ENCODE measurements at regions of chr16 and their contacts with region 1.

Region 1: GRCh38 chr16:50368410-50369132 is at the start of gene BRD7:
- DNase-seq: peak; percentile 56
- ATAC-seq: peak; percentile 63
- H3K4me3 ChIP-seq: peak within 1 kb of the TSS; percentile 71
- H3K27ac ChIP-seq: no peak within 1 kb of the TSS
- H3K4me1 ChIP-seq: peaks cover 17% of the 10 kb centered on the region
- H3K27me3 ChIP-seq: no peaks in the 10 kb centered on the region
- CTCF ChIP-seq: no peak
- total RNA-seq, gene BRD7: 38.4 and 40.0 TPM in 2 replicates

Region 2: DNA sequence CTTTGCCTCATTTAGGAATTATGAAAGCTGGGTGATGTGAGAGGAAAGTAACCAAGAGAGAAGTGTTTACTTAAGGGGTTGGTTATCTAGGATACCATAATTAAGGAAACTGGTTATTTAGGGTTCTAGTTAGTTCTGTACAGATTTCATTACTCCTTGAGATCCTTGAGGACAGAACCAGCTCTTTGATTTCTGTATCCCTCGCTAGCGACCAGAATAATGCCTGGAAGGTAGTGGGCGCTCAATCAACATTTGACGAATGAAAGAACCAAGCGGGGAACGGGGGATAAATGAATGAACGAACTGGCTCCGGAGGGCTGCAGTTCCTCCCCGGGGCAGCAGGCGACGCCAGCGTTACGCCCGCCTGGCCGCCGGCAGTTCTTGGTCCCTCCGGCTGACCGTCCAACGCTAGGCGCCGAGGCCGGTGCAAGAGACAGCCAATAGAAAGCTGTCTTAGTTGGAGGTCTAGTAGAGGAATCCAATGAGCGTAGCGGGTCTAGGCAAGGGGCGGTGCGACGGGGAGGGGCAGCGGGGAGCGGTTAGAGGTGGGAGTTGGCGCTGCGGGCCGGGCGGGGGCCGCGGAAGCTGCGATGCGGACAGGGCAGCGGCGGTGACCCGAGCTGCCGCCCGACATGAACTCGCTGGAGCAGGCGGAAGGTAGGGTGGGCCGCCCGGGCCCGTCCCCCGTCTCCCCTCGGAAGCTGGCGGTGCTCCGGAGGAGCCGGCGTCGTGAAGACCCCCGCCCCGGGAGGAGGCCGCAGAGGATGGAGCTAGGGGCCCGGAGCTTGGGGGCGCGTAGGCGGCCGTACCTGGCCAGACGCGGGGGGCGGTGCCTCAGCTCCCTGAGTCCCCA is 343.7 kb before region 1 on chr16 and contains the start of gene CNEP1R1:
- CTCF ChIA-PET with region 1: no interaction called
- POLR2A ChIA-PET with region 1: no interaction called
- intact Hi-C with region 1: loop called (anchors 10 kb)
- DNase-seq: peak; percentile 93
- ATAC-seq: peak; percentile 93
- H3K4me3 ChIP-seq: peak within 1 kb of the TSS; percentile 95
- H3K27ac ChIP-seq: no peak within 1 kb of the TSS
- H3K4me1 ChIP-seq: peaks cover 6% of the 10 kb centered on the region
- H3K27me3 ChIP-seq: 0 out of 2 replicates have a peak, but pooled peaks cover 4% of the 10 kb centered on the region
- CTCF ChIP-seq: peak; percentile 91
- total RNA-seq, gene CNEP1R1: 7.0 and 10.5 TPM in 2 replicates

Region 3: GRCh38 chr16:50270510-50271147 is 97.9 kb before region 1 on chr16:
- CTCF ChIA-PET with region 1: interaction called, 11 read pairs
- POLR2A ChIA-PET with region 1: no interaction called
- intact Hi-C with region 1: no loop called
- DNase-seq: no peak
- ATAC-seq: no peak
- H3K4me3 ChIP-seq: no peak overlapping the region
- H3K27ac ChIP-seq: no peak overlapping the region
- H3K4me1 ChIP-seq: 0 out of 2 replicates have a peak, but pooled peaks cover 6% of the 10 kb centered on the region
- H3K27me3 ChIP-seq: no peaks in the 10 kb centered on the region
- CTCF ChIP-seq: no peak

Region 4: GRCh38 chr16:50326949-50327402 is 41.6 kb before region 1 on chr16:
- CTCF ChIA-PET with region 1: no interaction called
- POLR2A ChIA-PET with region 1: no interaction called
- intact Hi-C with region 1: loop called (anchors 5 kb)
- DNase-seq: peak; percentile 58
- ATAC-seq: peak; percentile 68; the same call in 1 of the 2 replicates
- H3K4me3 ChIP-seq: no peak overlapping the region
- H3K27ac ChIP-seq: no peak overlapping the region
- H3K4me1 ChIP-seq: no peaks in the 10 kb centered on the region
- H3K27me3 ChIP-seq: no peaks in the 10 kb centered on the region
- CTCF ChIP-seq: peak; percentile 67

Region 5: GRCh38 chr16:50665128-50665878 is 296.7 kb after region 1 on chr16:
- CTCF ChIA-PET with region 1: interaction called, 3 read pairs
- POLR2A ChIA-PET with region 1: no interaction called
- intact Hi-C with region 1: loop called (anchors 10 kb)
- DNase-seq: peak; percentile 79
- ATAC-seq: peak; percentile 79
- H3K4me3 ChIP-seq: peak overlapping the region; percentile 64
- H3K27ac ChIP-seq: no peak overlapping the region
- H3K4me1 ChIP-seq: no peaks in the 10 kb centered on the region
- H3K27me3 ChIP-seq: no peaks in the 10 kb centered on the region
- CTCF ChIP-seq: peak; percentile 70

Region 6: GRCh38 chr16:50741808-50742575 is 373.4 kb after region 1 on chr16 and contains the start of gene CYLD:
- CTCF ChIA-PET with region 1: interaction called, 3 read pairs
- POLR2A ChIA-PET with region 1: no interaction called
- intact Hi-C with region 1: loop called (anchors 10 kb)
- DNase-seq: peak; percentile 97
- ATAC-seq: peak; percentile 97
- H3K4me3 ChIP-seq: peak within 1 kb of the TSS; percentile 77
- H3K27ac ChIP-seq: no peak within 1 kb of the TSS
- H3K4me1 ChIP-seq: peaks cover 34% of the 10 kb centered on the region
- H3K27me3 ChIP-seq: no peaks in the 10 kb centered on the region
- CTCF ChIP-seq: no peak
- total RNA-seq, gene CYLD: 8.5 and 8.6 TPM in 2 replicates

Region 7: DNA sequence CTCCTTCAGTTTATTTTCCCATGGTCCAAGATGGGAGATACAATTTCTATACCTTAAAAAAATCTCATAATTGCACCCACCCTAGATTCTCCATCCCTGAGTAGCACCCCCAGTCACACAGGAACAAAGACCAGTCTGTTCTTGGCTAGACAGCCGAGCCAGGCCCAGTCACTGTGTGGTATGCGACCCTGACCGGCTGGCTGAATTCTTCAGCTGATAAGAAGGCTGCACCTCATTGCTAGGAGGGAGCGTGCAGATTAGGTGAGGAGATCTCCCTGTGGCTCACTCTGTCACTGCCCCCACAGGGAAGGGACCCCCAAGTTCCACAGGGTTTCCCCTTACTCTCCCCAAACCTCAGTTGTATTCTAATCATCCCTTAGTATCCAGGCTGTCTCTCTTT is 643.8 kb after region 1 on chr16:
- CTCF ChIA-PET with region 1: interaction called, 12 read pairs
- POLR2A ChIA-PET with region 1: no interaction called
- intact Hi-C with region 1: no loop called
- DNase-seq: no peak
- ATAC-seq: no peak
- H3K4me3 ChIP-seq: no peak overlapping the region
- H3K27ac ChIP-seq: no peak overlapping the region
- H3K4me1 ChIP-seq: no peaks in the 10 kb centered on the region
- H3K27me3 ChIP-seq: no peaks in the 10 kb centered on the region
- CTCF ChIP-seq: no peak